Uterus (tissue), 4 donors: ENCODE measurements at regions of chr9 and their contacts with region 1.

Region 1: GRCh38 chr9:98255578-98256296 is at the start of gene TBC1D2:
- DNase-seq: peak; percentile 95
- H3K4me3 ChIP-seq: peak within 1 kb of the TSS; percentile 64 to 65
- H3K27ac ChIP-seq: peak within 1 kb of the TSS; percentile 93 to 94
- H3K4me1 ChIP-seq: peaks cover 0 to 6% of the 10 kb centered on the region in 2 donors
- H3K27me3 ChIP-seq: no peaks in the 10 kb centered on the region
- CTCF ChIP-seq: peak in 3 of 4 experiments; percentile 16 to 28 (median 26)
- POLR2A ChIP-seq: peak; percentile 43 to 54
- total RNA-seq, gene TBC1D2: 2.5 to 10.9 (median 7.5) TPM

Region 2: DNA sequence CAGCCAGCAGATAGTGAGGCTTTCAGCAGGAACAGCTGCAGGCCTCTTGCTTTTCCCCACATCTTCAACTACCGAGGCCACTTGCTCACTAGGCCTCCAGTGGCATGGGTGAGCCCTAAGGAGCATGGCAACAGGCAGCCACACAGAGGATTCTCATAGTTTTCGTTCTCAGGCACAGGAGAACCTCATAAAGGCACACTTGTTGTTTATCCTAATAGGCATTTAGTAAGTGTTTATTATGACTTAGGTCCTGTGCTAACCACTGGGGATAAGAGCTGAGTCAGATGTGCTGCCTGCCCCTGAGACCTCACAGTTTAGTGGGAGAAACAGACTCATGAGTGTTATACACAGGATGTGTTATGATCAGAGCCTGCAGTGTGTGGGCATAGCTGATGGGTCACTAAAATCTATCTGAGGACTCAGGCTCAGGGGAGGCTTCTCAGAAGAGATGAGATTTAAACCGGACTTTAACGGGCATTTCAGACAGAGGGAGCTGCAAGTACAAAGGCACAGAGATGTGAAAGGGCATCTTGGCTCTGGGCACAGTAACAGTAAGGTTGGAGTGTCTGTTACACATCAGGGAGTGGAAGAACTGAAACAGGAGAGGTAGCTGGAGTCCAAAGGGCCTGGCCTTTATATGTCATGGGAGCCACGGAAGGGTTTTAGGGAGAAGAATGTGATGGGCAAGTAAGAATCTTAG is 296.8 kb before region 1 on chr9:
- intact Hi-C with region 1: no loop called
- DNase-seq: no peak
- H3K4me3 ChIP-seq: no peak overlapping the region
- H3K27ac ChIP-seq: no peak overlapping the region
- H3K4me1 ChIP-seq: no peaks in the 10 kb centered on the region
- H3K27me3 ChIP-seq: no peaks in the 10 kb centered on the region
- CTCF ChIP-seq: no peak
- POLR2A ChIP-seq: no peak

Region 3: GRCh38 chr9:98207606-98208005 is 48.1 kb before region 1 on chr9:
- intact Hi-C with region 1: loop called (anchors 10 kb)
- DNase-seq: no peak
- H3K4me3 ChIP-seq: no peak overlapping the region
- H3K27ac ChIP-seq: no peak overlapping the region
- H3K4me1 ChIP-seq: no peaks in the 10 kb centered on the region
- H3K27me3 ChIP-seq: no peaks in the 10 kb centered on the region
- CTCF ChIP-seq: no peak
- POLR2A ChIP-seq: no peak